Activated CD4-positive, alpha-beta T cell treated with anti-CD3 and anti-CD28 coated beads for 36 hours (primary cell): ENCODE measurements at regions of chr5 and their contacts with region 1.

Region 1: DNA sequence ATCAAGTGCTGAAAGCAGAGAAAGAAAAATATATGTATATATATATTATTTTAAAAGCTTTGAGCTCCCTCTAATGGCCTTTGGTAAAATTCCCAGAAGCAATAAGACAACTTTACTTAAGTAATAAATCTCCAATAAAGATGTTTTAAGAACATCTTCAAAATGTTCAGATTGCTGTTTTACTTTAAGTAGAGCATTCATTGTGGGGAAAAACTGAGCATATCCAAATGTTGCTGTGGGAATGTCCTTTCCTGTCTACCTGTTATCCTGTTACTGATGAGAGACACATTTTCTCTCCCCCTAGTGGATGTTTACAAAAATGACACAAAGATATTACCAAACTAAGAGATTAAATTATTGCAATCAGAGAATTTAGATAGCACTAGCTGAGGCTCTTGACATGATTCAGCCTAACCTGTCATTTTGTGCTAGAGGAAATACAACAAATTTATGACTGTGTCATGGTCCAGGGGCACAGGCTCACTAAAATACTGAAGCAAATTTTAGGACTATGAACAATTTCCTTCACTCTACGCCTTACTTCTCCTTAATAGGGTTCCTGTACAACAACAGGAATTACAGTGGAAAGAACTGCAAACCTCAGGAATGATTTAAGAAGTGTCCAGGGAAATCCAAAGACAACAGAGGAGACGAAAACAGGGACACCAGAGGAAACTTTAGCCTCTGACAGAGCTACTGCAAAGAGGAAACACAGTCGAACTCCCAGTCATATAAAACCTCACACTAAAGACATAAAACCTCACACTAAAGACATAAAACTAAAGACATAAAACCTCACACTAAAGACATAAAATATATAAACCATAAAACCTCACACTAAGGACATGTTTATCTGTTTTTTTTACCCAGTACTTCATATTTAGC is 24.3 kb upstream of the PRRC1 start:
- DNase-seq: no peak
- ATAC-seq: peak; percentile 51
- H3K4me3 Mint-ChIP-seq: no peak overlapping the region
- H3K27ac Mint-ChIP-seq: no peak overlapping the region
- H3K4me1 Mint-ChIP-seq: no peaks in the 10 kb centered on the region
- H3K27me3 Mint-ChIP-seq: peaks cover 12% of the 10 kb centered on the region

Region 2: GRCh38 chr5:126339215-126339805 is 1153.8 kb before region 1 on chr5:
- CTCF ChIA-PET with region 1: interaction called, 3 read pairs
- POLR2A ChIA-PET with region 1: no interaction called
- intact Hi-C with region 1: loop called in 1 of 2 experiments (anchors 5 kb)
- DNase-seq: peak; percentile 64
- ATAC-seq: peak; percentile 53
- H3K4me3 Mint-ChIP-seq: no peak overlapping the region
- H3K27ac Mint-ChIP-seq: no peak overlapping the region
- H3K4me1 Mint-ChIP-seq: no peaks in the 10 kb centered on the region
- H3K27me3 Mint-ChIP-seq: peaks cover 6% of the 10 kb centered on the region

Region 3: GRCh38 chr5:126462239-126463014 is 1030.7 kb before region 1 on chr5:
- CTCF ChIA-PET with region 1: no interaction called
- POLR2A ChIA-PET with region 1: no interaction called
- intact Hi-C with region 1: no loop called
- DNase-seq: no peak
- ATAC-seq: no peak
- H3K4me3 Mint-ChIP-seq: no peak overlapping the region
- H3K27ac Mint-ChIP-seq: no peak overlapping the region
- H3K4me1 Mint-ChIP-seq: peaks cover 32% of the 10 kb centered on the region
- H3K27me3 Mint-ChIP-seq: no peaks in the 10 kb centered on the region

Region 4: DNA sequence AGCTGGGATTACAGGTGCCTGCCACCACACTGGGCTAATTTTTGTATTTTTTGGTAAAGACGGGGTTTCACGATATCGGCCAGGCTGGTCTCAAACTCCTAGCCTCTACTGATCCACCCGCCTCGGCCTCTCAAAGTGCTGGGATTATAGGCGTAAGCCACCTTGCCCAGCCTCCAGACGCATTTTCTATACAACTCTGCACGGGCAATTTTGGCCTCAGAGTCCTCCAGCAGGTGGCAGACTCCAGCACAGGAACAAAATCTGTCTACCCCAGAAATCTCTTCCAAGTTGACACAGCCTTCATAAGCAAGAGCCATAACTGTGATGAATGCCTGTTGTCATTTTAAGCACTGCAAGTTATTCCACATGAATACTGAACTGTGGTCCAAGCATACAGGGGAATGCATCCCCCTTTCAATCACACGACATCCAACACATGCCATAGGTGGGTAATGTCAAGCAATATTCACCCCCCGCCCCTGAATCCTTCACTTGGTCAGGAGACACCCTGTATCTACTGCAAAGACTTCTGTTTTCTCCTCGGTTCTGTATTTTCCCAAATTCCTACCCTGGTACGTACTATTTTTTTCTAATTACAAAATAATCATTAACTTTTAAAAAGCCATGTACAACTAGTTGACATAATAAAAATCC is 948.9 kb before region 1 on chr5:
- CTCF ChIA-PET with region 1: interaction called, 4 read pairs
- POLR2A ChIA-PET with region 1: no interaction called
- intact Hi-C with region 1: loop called in 1 of 2 experiments (anchors 2 kb)
- DNase-seq: peak; percentile 61
- ATAC-seq: no peak
- H3K4me3 Mint-ChIP-seq: no peak overlapping the region
- H3K27ac Mint-ChIP-seq: no peak overlapping the region
- H3K4me1 Mint-ChIP-seq: no peaks in the 10 kb centered on the region
- H3K27me3 Mint-ChIP-seq: no peaks in the 10 kb centered on the region

Region 5: DNA sequence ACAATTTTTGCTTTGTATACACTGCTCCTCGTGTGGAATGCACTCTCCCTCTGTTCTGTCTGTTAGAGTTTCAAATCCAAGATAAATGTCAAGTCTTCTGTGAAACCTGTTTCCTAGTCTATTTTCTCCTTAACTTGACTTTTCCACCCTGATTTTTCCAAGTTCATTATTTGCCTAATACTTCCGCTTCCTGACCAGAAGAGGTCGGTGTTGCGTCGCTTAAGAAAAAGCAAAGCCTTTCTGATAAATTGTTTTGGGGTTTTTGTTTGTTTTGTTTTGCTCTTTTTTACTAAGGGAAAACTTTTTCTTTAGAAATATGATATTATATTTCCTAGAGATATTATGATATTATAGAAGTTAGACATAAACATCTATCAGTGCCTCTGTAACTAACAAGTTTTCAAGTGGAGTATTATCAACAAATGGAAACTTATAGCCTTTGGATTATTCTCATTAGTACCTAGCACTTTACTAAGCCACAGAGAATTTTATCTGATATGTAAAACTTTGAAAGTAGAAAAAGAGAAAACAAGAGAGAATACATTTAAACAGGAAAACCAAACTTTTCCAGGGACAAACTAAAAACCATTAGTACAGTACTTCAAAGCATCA is 836.6 kb before region 1 on chr5:
- CTCF ChIA-PET with region 1: interaction called, 4 read pairs
- POLR2A ChIA-PET with region 1: no interaction called
- intact Hi-C with region 1: loop called (anchors 1 kb)
- DNase-seq: peak; percentile 52
- ATAC-seq: no peak
- H3K4me3 Mint-ChIP-seq: no peak overlapping the region
- H3K27ac Mint-ChIP-seq: no peak overlapping the region
- H3K4me1 Mint-ChIP-seq: peaks cover 5% of the 10 kb centered on the region
- H3K27me3 Mint-ChIP-seq: peaks cover 2% of the 10 kb centered on the region

Region 6: GRCh38 chr5:127290019-127290945 is 202.8 kb before region 1 on chr5 and contains the start of gene MEGF10:
- CTCF ChIA-PET with region 1: interaction called, 6 read pairs
- POLR2A ChIA-PET with region 1: no interaction called
- intact Hi-C with region 1: loop called (anchors 1 to 2 kb)
- DNase-seq: peak; percentile 62
- ATAC-seq: peak; percentile 51
- H3K4me3 Mint-ChIP-seq: peak within 1 kb of the TSS; percentile 7
- H3K27ac Mint-ChIP-seq: no peak within 1 kb of the TSS
- H3K4me1 Mint-ChIP-seq: peaks cover 13% of the 10 kb centered on the region
- H3K27me3 Mint-ChIP-seq: peaks cover 64% of the 10 kb centered on the region
- total RNA-seq, gene MEGF10: not detected

Region 7: GRCh38 chr5:127313847-127314473 is 179.1 kb before region 1 on chr5:
- CTCF ChIA-PET with region 1: interaction called, 14 read pairs
- POLR2A ChIA-PET with region 1: no interaction called
- intact Hi-C with region 1: no loop called
- DNase-seq: peak; percentile 83
- ATAC-seq: peak; percentile 64
- H3K4me3 Mint-ChIP-seq: no peak overlapping the region
- H3K27ac Mint-ChIP-seq: no peak overlapping the region
- H3K4me1 Mint-ChIP-seq: peaks cover 2% of the 10 kb centered on the region
- H3K27me3 Mint-ChIP-seq: peaks cover 9% of the 10 kb centered on the region

Region 8: GRCh38 chr5:127505905-127506304 is 12.8 kb after region 1 on chr5:
- CTCF ChIA-PET with region 1: interaction called, 19 read pairs
- POLR2A ChIA-PET with region 1: no interaction called
- intact Hi-C with region 1: no loop called
- DNase-seq: no peak
- ATAC-seq: no peak
- H3K4me3 Mint-ChIP-seq: no peak overlapping the region
- H3K27ac Mint-ChIP-seq: no peak overlapping the region
- H3K4me1 Mint-ChIP-seq: no peaks in the 10 kb centered on the region
- H3K27me3 Mint-ChIP-seq: peaks cover 14% of the 10 kb centered on the region

Region 9: GRCh38 chr5:127549518-127549917 is 56.4 kb after region 1 on chr5:
- CTCF ChIA-PET with region 1: no interaction called
- POLR2A ChIA-PET with region 1: no interaction called
- intact Hi-C with region 1: no loop called
- DNase-seq: no peak
- ATAC-seq: no peak
- H3K4me3 Mint-ChIP-seq: no peak overlapping the region
- H3K27ac Mint-ChIP-seq: no peak overlapping the region
- H3K4me1 Mint-ChIP-seq: peaks cover 7% of the 10 kb centered on the region
- H3K27me3 Mint-ChIP-seq: no peaks in the 10 kb centered on the region